Activated B cell treated with CpG ODN at 0.5 μM for 24 hours (primary cell): ENCODE measurements at regions of chr2 and their contacts with region 1.

Region 1: DNA sequence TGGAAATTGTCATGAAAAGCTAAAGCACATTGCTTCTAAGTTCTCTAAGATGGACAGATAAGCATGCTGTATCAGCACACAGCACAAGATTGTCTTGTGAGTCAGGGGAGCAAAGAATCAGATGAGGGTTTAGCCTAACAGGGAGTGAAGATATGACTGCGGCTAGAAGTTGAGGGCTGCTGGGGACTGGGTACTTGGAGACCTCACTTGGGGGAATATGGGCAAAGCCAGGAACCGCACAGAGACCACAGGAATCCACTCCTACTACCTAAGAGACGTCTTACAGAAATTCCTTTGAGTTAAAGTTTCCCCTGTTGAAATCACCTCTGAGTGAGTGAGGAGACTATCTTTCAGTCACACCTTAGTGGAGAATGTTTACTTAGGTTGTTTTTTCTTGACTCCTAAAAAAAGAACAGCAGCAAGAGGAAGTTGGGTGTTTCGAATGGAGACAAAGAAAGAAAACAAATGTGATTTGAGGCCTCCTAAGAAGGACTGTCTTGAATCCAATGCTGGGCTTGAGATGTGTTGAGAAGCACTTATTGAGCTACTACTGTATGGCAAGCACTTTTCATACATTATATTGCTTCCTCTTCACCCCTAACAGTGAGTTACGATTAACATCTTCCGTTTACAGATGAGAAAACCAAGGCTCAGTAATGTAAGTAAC is 100.7 kb downstream of the ANKRD44 start:
- DNase-seq: no peak
- ATAC-seq: peak; percentile 13
- H3K4me3 Mint-ChIP-seq: peak overlapping the region; percentile 66
- H3K27ac Mint-ChIP-seq: peak overlapping the region; percentile 98
- H3K4me1 Mint-ChIP-seq: peaks cover 99% of the 10 kb centered on the region
- H3K27me3 Mint-ChIP-seq: no peaks in the 10 kb centered on the region
- CTCF ChIP-seq: no peak

Region 2: GRCh38 chr2:196566961-196567666 is 642.8 kb before region 1 on chr2:
- CTCF ChIA-PET with region 1: no interaction called
- POLR2A ChIA-PET with region 1: no interaction called
- intact Hi-C with region 1: no loop called
- DNase-seq: no peak
- ATAC-seq: no peak
- H3K4me3 Mint-ChIP-seq: no peak overlapping the region
- H3K27ac Mint-ChIP-seq: no peak overlapping the region
- H3K4me1 Mint-ChIP-seq: no peaks in the 10 kb centered on the region
- H3K27me3 Mint-ChIP-seq: peaks cover 31% of the 10 kb centered on the region
- CTCF ChIP-seq: no peak

Region 3: GRCh38 chr2:197024206-197024605 is 185.7 kb before region 1 on chr2:
- CTCF ChIA-PET with region 1: no interaction called
- POLR2A ChIA-PET with region 1: no interaction called
- intact Hi-C with region 1: no loop called
- DNase-seq: no peak
- ATAC-seq: no peak
- H3K4me3 Mint-ChIP-seq: no peak overlapping the region
- H3K27ac Mint-ChIP-seq: no peak overlapping the region
- H3K4me1 Mint-ChIP-seq: peaks cover 3% of the 10 kb centered on the region
- H3K27me3 Mint-ChIP-seq: no peaks in the 10 kb centered on the region
- CTCF ChIP-seq: no peak

Region 4: GRCh38 chr2:197198890-197199289 is 11.0 kb before region 1 on chr2:
- CTCF ChIA-PET with region 1: interaction called, 9 read pairs
- POLR2A ChIA-PET with region 1: interaction called, 35 read pairs
- intact Hi-C with region 1: loop called (anchors 1 kb)
- DNase-seq: peak; percentile 56
- ATAC-seq: peak; percentile 94
- H3K4me3 Mint-ChIP-seq: peak overlapping the region; percentile 88
- H3K27ac Mint-ChIP-seq: peak overlapping the region; percentile 96
- H3K4me1 Mint-ChIP-seq: peaks cover 83% of the 10 kb centered on the region
- H3K27me3 Mint-ChIP-seq: no peaks in the 10 kb centered on the region
- CTCF ChIP-seq: no peak

Region 5: GRCh38 chr2:197223451-197223850 is 13.6 kb after region 1 on chr2:
- CTCF ChIA-PET with region 1: interaction called, 3 read pairs
- POLR2A ChIA-PET with region 1: interaction called, 6 read pairs
- intact Hi-C with region 1: loop called (anchors 2 kb)
- DNase-seq: no peak
- ATAC-seq: peak; percentile 28
- H3K4me3 Mint-ChIP-seq: no peak overlapping the region
- H3K27ac Mint-ChIP-seq: peak overlapping the region; percentile 65
- H3K4me1 Mint-ChIP-seq: peaks cover 84% of the 10 kb centered on the region
- H3K27me3 Mint-ChIP-seq: no peaks in the 10 kb centered on the region
- CTCF ChIP-seq: no peak

Region 6: GRCh38 chr2:197239434-197239833 is 29.6 kb after region 1 on chr2:
- CTCF ChIA-PET with region 1: interaction called, 3 read pairs
- POLR2A ChIA-PET with region 1: interaction called, 10 read pairs
- intact Hi-C with region 1: loop called (anchors 1 kb)
- DNase-seq: no peak
- ATAC-seq: peak; percentile 45
- H3K4me3 Mint-ChIP-seq: peak overlapping the region; percentile 76
- H3K27ac Mint-ChIP-seq: peak overlapping the region; percentile 91
- H3K4me1 Mint-ChIP-seq: peaks cover 87% of the 10 kb centered on the region
- H3K27me3 Mint-ChIP-seq: no peaks in the 10 kb centered on the region
- CTCF ChIP-seq: no peak